AG04450 (cell line): ENCODE measurements at regions of chr11 and their contacts with region 1.

Region 1: GRCh38 chr11:13238879-13239514 is 38.6 kb upstream of the BMAL1 start:
- DNase-seq: no peak
- H3K4me3 ChIP-seq: no peak overlapping the region
- H3K27ac ChIP-seq: no peak overlapping the region
- H3K27me3 ChIP-seq: no peaks in the 10 kb centered on the region
- CTCF ChIP-seq: peak; percentile 81

Region 2: GRCh38 chr11:13061284-13061990 is 177.6 kb before region 1 on chr11:
- CTCF ChIA-PET with region 1: no interaction called
- POLR2A ChIA-PET with region 1: no interaction called
- DNase-seq: no peak
- H3K4me3 ChIP-seq: no peak overlapping the region
- H3K27ac ChIP-seq: no peak overlapping the region
- H3K27me3 ChIP-seq: peaks cover 27% of the 10 kb centered on the region
- CTCF ChIP-seq: no peak

Region 3: GRCh38 chr11:13216019-13216710 is 22.8 kb before region 1 on chr11:
- CTCF ChIA-PET with region 1: interaction called, 24 read pairs
- POLR2A ChIA-PET with region 1: no interaction called
- DNase-seq: peak; percentile 87
- H3K4me3 ChIP-seq: peak overlapping the region; percentile 23; the same call in 1 of the 2 replicates
- H3K27ac ChIP-seq: peak overlapping the region; percentile 100
- H3K27me3 ChIP-seq: no peaks in the 10 kb centered on the region
- CTCF ChIP-seq: no peak

Region 4: DNA sequence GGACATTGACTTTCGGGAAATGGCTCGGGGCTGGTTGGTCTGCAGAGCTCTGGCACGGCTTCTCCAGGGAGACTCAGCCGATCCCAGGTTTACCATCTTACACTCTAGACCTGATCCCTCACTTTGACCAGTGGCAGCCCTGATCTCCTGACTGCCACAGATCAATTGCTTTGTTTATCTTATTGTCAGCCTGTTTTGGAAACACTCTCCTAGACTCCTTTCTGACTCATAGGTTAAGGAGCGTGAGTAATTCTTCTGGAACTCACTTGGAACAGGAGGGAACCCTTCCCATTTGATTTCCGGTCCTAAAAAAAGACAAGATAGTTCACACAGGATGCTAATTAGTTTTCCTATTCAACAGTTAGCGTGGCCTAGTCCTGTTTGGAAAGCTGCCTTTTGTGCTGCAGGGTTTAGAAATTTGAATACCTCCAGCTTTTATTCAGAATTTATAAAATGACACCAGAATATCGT is 22.6 kb after region 1 on chr11:
- CTCF ChIA-PET with region 1: interaction called, 15 read pairs
- POLR2A ChIA-PET with region 1: no interaction called
- DNase-seq: peak; percentile 26
- H3K4me3 ChIP-seq: no peak overlapping the region
- H3K27ac ChIP-seq: peak overlapping the region; percentile 58
- H3K27me3 ChIP-seq: no peaks in the 10 kb centered on the region
- CTCF ChIP-seq: no peak